Heart left ventricle (tissue), 16 donors: ENCODE measurements at regions of chr10 and their contacts with region 1.

Region 1: GRCh38 chr10:43461950-43462349 is 25.0 kb downstream of the ZNF487 start:
- DNase-seq: no peak
- ATAC-seq: peak in 2 of 4 donors; percentile 67 to 70
- H3K4me3 ChIP-seq: peak overlapping the region in 6 of 12 donors; percentile 9 to 43 (median 20)
- H3K27ac ChIP-seq: no peak overlapping the region
- H3K4me1 ChIP-seq: peaks cover 0 to 3% (median 0%) of the 10 kb centered on the region in 12 donors
- H3K27me3 ChIP-seq: no peaks in the 10 kb centered on the region
- CTCF ChIP-seq: peak; percentile 63 to 84 (median 76)
- POLR2A ChIP-seq: no peak

Region 2: GRCh38 chr10:42866115-42866995 is 595.6 kb before region 1 on chr10:
- intact Hi-C with region 1: loop called in 3 of 10 experiments (anchors 5 to 10 kb)
- DNase-seq: peak; percentile 75 to 93 (median 84)
- ATAC-seq: peak; percentile 96 to 100 (median 100)
- H3K4me3 ChIP-seq: peak overlapping the region in 10 of 12 donors; percentile 5 to 45 (median 29)
- H3K27ac ChIP-seq: no peak overlapping the region
- H3K4me1 ChIP-seq: peaks cover 0 to 18% (median 11%) of the 10 kb centered on the region in 12 donors
- H3K27me3 ChIP-seq: peaks cover 5 to 49% (median 19%) of the 10 kb centered on the region in 9 donors
- CTCF ChIP-seq: peak; percentile 54 to 88 (median 80)
- POLR2A ChIP-seq: no peak

Region 3: GRCh38 chr10:43055991-43056567 is 405.9 kb before region 1 on chr10:
- intact Hi-C with region 1: no loop called
- DNase-seq: peak in 3 of 5 donors; percentile 13 to 48 (median 23)
- ATAC-seq: no peak
- H3K4me3 ChIP-seq: no peak overlapping the region
- H3K27ac ChIP-seq: no peak overlapping the region
- H3K4me1 ChIP-seq: peaks cover 0 to 7% (median 0%) of the 10 kb centered on the region in 12 donors
- H3K27me3 ChIP-seq: peaks cover 0 to 34% (median 0%) of the 10 kb centered on the region in 9 donors
- CTCF ChIP-seq: no peak
- POLR2A ChIP-seq: no peak

Region 4: GRCh38 chr10:43204943-43205671 is 256.8 kb before region 1 on chr10:
- intact Hi-C with region 1: loop called in 1 of 10 experiments (anchors 5 kb)
- DNase-seq: peak; percentile 26 to 67 (median 45)
- ATAC-seq: peak; percentile 45 to 70 (median 62)
- H3K4me3 ChIP-seq: no peak overlapping the region
- H3K27ac ChIP-seq: no peak overlapping the region
- H3K4me1 ChIP-seq: peaks cover 0 to 13% (median 7%) of the 10 kb centered on the region in 12 donors
- H3K27me3 ChIP-seq: peaks cover 0 to 17% (median 0%) of the 10 kb centered on the region in 9 donors
- CTCF ChIP-seq: peak; percentile 53 to 72 (median 62)
- POLR2A ChIP-seq: no peak

Region 5: DNA sequence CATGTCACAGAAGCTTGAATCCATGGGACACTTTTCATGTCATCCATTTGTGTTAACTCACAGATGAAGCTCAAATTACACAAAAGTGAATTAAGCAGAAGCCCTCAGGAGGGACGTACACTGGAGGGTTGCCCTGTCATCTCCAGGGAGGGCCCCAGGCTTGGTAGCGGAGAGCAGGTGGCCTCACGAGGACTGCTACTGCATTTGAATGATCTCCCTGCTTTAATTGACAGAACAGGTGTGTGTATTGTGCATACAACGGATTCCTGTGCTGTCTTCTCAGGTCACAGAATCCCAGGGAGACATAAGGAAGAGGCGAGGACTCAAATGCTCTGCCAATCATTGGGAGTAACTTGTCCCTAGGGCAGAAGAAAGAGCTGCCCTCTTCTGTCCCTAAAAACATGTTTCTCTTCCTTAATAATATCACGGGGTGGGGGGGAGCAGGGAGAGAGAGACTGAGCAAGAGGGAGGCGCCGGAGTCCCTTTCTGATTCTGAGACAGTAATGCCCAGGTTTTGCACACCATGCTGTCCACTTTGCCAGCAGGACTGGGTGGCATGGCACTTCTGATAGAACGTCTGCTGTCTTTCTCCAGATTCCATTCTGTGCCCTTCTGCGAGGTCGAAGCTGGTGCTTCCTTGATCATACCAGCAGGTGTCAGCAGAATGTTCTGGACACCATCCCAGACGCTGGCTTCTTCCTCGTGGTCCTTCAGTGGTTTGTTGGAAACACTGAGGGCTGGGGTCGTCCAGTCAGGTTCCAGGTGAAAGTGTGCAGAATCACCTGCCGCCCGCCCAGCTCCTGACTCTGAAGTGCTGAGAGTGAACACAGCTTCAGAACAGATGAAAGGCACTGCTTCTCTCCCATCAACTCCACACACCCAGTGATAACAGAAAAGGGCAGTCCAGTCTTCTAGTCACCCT is 168.9 kb before region 1 on chr10:
- intact Hi-C with region 1: loop called (anchors 1 to 2 kb)
- DNase-seq: peak in 4 of 5 donors; percentile 23 to 55 (median 42)
- ATAC-seq: peak; percentile 32 to 80 (median 74)
- H3K4me3 ChIP-seq: no peak overlapping the region
- H3K27ac ChIP-seq: no peak overlapping the region
- H3K4me1 ChIP-seq: peaks cover 0 to 13% (median 0%) of the 10 kb centered on the region in 12 donors
- H3K27me3 ChIP-seq: peaks cover 0 to 39% (median 8%) of the 10 kb centered on the region in 9 donors
- CTCF ChIP-seq: peak; percentile 50 to 80 (median 68)
- POLR2A ChIP-seq: no peak